ENCODE measurements at regions of chr6 and their contacts with region 1.

Region 1: GRCh38 chr6:29705389-29706231 is 17.6 kb upstream of the HLA-F start:
- DNase-seq: no peak
- H3K4me3 Mint-ChIP-seq: no peak overlapping the region
- H3K27ac Mint-ChIP-seq: no peak overlapping the region
- H3K4me1 Mint-ChIP-seq: peaks cover 41% of the 10 kb centered on the region
- H3K27me3 Mint-ChIP-seq: peaks cover 33% of the 10 kb centered on the region

Region 2: GRCh38 chr6:29723262-29723665 is 17.7 kb after region 1 on chr6 and contains the start of gene HLA-F:
- CTCF ChIA-PET with region 1: interaction called, 3 read pairs
- POLR2A ChIA-PET with region 1: interaction called, 22 read pairs
- DNase-seq: peak; percentile 85
- H3K4me3 Mint-ChIP-seq: peak within 1 kb of the TSS; percentile 89
- H3K27ac Mint-ChIP-seq: peak within 1 kb of the TSS; percentile 76
- H3K4me1 Mint-ChIP-seq: peaks cover 53% of the 10 kb centered on the region
- H3K27me3 Mint-ChIP-seq: no peaks in the 10 kb centered on the region
- total RNA-seq, gene HLA-F: 318 to 346 TPM

Region 3: DNA sequence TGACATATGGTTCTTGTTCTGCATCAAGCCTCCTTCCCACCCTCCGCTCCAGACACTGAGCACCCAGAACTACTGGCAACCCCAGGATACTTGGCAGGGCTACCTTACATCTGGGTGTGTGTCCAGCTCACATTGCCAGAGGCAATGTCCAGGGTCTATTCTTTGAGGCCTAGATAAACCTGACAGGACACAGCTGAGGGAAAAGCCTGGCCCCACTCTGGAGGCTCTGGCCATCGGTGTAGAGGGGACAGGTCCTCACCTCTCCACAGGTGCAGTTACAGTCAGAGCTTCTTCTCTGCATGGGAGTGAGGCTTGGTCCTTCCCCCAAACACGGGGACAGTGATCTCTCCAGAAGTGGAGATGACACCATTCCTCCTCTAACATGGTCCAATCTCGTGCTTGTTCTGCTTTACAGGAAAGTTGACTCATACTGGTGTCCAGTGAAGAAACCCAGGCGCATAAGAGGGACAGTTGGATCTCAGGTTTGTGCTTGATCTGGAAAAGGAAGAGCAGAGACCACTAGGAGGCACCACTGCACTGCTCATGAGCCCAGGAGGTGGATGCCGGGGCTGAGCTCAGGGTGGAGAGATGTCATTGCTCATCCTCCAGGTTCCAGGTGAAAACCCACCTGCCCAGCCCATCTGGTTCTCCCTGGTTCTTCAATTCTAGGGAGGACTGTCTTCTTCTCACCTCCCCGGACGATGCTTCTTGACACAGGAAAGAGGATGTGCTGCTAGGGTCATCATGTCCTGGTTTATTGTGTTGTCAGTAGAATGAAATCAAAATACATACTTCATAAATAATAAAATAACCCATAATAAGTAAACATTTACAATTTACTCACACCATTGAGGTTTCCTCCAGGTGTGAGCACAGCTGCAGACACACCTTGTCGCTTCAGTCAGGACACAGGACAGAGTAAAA is 32.4 kb after region 1 on chr6:
- CTCF ChIA-PET with region 1: interaction called, 10 read pairs
- POLR2A ChIA-PET with region 1: interaction called, 4 read pairs
- DNase-seq: peak; percentile 76
- H3K4me3 Mint-ChIP-seq: no peak overlapping the region
- H3K27ac Mint-ChIP-seq: no peak overlapping the region
- H3K4me1 Mint-ChIP-seq: peaks cover 7% of the 10 kb centered on the region
- H3K27me3 Mint-ChIP-seq: no peaks in the 10 kb centered on the region

Region 4: GRCh38 chr6:29752451-29753308 is 47.1 kb after region 1 on chr6:
- CTCF ChIA-PET with region 1: interaction called, 13 read pairs
- POLR2A ChIA-PET with region 1: interaction called, 9 read pairs
- DNase-seq: peak; percentile 87
- H3K4me3 Mint-ChIP-seq: peak overlapping the region; percentile 83
- H3K27ac Mint-ChIP-seq: peak overlapping the region; percentile 87
- H3K4me1 Mint-ChIP-seq: peaks cover 52% of the 10 kb centered on the region
- H3K27me3 Mint-ChIP-seq: peaks cover 18% of the 10 kb centered on the region

Region 5: DNA sequence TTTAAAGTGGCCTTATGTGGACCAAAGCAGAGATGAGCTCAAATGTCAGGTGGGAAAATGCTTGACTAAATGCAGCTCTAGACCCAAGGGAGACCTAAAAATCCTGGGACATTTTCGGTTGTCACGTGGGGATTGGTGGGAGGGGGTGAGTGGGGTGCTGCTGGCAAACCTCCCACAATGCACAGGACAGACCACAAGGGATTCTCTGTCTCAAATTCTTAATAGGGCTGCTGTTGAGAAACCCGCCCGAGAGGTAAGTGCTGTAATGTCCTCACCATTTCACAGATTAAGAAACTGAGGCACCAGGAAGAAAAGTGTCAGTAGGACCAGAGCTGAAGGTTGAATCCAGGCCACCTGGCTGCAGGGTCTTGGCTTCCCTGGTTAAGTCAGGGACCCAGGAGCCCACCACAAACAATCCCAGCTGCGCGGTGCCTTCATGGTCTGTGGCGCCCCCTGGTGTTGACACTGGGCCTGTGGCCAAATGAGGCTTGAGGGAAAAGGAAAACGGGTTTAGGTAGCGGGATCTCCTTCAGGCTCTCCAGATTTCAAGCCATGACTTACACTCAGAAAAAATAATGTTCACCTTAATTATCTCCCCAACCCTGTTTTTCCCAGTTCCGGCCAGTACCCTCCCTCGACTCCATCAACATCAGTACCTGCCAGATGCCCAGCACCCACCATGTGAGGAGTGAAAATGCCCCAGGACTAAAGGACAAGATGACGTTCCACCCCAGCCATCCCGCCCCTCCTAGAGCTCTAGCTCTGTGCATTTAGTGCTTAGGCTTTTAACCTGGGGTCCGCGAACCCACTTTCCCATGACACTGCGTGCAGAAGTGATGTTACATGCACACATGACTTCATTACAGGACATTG is 129.2 kb after region 1 on chr6:
- CTCF ChIA-PET with region 1: interaction called, 11 read pairs
- POLR2A ChIA-PET with region 1: interaction called, 3 read pairs
- DNase-seq: peak; percentile 56
- H3K4me3 Mint-ChIP-seq: no peak overlapping the region
- H3K27ac Mint-ChIP-seq: no peak overlapping the region
- H3K4me1 Mint-ChIP-seq: peaks cover 9% of the 10 kb centered on the region
- H3K27me3 Mint-ChIP-seq: peaks cover 62% of the 10 kb centered on the region

Measured in activated CD4-positive, alpha-beta memory T cell treated with anti-CD3 and anti-CD28 coated beads, Interleukin-2, amount 10 ng/mL, durations not matched to agents 7 days and 5 days (primary cell).